Activated naive CD4-positive, alpha-beta T cell treated with anti-CD3 and anti-CD28 coated beads for 36 hours (primary cell): ENCODE measurements at regions of chr19 and their contacts with region 1.

Region 1: GRCh38 chr19:45584332-45585157 is at the start of gene OPA3:
- DNase-seq: peak; percentile 100
- H3K4me3 Mint-ChIP-seq: peak within 1 kb of the TSS; percentile 89
- H3K27ac Mint-ChIP-seq: peak within 1 kb of the TSS; percentile 98
- H3K4me1 Mint-ChIP-seq: peaks cover 14% of the 10 kb centered on the region
- H3K27me3 Mint-ChIP-seq: peaks cover 3% of the 10 kb centered on the region
- total RNA-seq, gene OPA3: 12.4 to 12.7 TPM

Region 2: GRCh38 chr19:45370410-45371204 is 213.9 kb before region 1 on chr19 and contains the start of gene ERCC2:
- CTCF ChIA-PET with region 1: no interaction called
- intact Hi-C with region 1: loop called (anchors 1 kb)
- DNase-seq: peak; percentile 100
- H3K4me3 Mint-ChIP-seq: peak within 1 kb of the TSS; percentile 93
- H3K27ac Mint-ChIP-seq: peak within 1 kb of the TSS; percentile 91
- H3K4me1 Mint-ChIP-seq: peaks cover 5% of the 10 kb centered on the region
- H3K27me3 Mint-ChIP-seq: no peaks in the 10 kb centered on the region
- total RNA-seq, gene ERCC2: 20.6 to 22.9 TPM

Region 3: DNA sequence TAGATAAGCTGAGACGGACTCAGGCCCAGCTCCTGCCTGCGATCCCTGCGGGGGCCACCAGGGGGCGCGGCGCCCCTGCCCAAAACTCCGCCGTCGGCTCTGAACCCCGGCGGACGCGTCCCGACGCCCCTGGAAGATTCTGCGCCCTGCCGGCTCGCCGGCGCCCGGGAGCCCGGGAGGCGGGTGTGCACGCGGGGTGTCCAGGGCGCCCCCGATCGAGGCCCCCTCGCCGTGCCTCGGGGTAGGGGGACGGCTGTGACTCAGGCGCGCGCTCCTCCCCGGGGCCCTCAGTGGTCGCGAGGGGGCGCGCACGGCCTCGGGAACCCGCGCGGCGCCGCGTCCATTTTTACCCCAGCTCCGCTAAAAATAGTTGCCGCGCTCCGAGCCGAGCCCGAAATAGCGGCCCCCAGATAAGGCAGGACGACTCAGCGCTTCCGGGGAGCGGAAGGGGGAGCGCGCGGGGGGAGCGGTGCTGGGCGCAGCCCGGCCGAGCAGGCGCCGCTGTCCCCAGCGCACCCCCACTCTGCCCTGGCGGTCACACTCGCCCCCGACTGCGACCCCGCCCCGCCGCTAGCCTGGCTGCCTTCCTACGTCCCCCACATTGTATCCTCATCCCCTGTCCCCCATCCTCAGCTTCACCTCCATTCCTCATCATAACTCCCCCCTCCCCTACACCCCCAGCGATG is 144.8 kb before region 1 on chr19:
- CTCF ChIA-PET with region 1: interaction called, 3 read pairs
- intact Hi-C with region 1: loop called (anchors 5 kb)
- DNase-seq: peak; percentile 81
- H3K4me3 Mint-ChIP-seq: peak overlapping the region; percentile 58
- H3K27ac Mint-ChIP-seq: no peak overlapping the region
- H3K4me1 Mint-ChIP-seq: peaks cover 27% of the 10 kb centered on the region
- H3K27me3 Mint-ChIP-seq: no peaks in the 10 kb centered on the region

Region 4: GRCh38 chr19:45558399-45558878 is 26.1 kb before region 1 on chr19:
- CTCF ChIA-PET with region 1: interaction called, 8 read pairs
- intact Hi-C with region 1: loop called (anchors 1 kb)
- DNase-seq: peak; percentile 88
- H3K4me3 Mint-ChIP-seq: no peak overlapping the region
- H3K27ac Mint-ChIP-seq: no peak overlapping the region
- H3K4me1 Mint-ChIP-seq: peaks cover 30% of the 10 kb centered on the region
- H3K27me3 Mint-ChIP-seq: no peaks in the 10 kb centered on the region

Region 5: DNA sequence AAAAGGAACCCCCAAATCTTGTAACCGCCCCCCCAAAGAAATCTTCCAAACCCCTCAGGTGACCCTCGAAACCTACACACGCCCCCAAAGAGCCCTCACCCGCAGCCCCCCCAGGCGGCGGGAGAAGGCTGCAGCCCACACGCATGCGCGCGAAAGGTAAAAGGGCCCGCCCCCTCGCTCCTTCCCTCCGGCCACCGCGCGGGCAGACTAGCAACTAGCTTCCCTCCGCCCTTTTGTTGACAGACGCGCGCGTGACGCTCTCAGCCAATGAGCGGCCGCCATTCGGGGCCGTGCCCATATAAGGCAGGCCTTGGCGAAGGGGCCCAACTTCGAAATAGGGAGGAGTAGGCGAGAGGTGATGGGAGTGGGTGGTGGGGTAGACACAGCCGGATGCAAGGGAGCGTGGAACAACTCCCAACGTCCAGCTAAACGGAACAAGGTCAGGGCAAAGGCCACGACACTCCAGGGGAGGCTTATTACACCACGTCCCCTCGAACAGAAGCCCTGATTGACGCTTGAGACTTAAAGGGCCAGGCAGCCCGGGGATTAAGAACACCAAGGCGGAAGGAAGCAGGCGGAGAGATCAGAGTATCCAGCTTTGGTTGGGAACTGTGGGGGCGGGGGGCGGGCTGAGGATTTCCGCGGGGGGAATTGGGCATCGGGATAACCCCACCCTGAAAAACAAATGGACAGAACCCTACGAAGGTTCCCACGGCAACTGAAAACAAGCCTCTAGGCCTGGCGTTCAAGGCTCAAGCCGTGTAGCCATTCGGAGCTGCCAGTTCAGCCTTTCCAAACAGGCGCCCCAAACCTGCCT is 132.8 kb after region 1 on chr19:
- CTCF ChIA-PET with region 1: no interaction called
- intact Hi-C with region 1: loop called (anchors 1 kb)
- DNase-seq: peak; percentile 99
- H3K4me3 Mint-ChIP-seq: peak overlapping the region; percentile 96
- H3K27ac Mint-ChIP-seq: peak overlapping the region; percentile 97
- H3K4me1 Mint-ChIP-seq: peaks cover 41% of the 10 kb centered on the region
- H3K27me3 Mint-ChIP-seq: no peaks in the 10 kb centered on the region

Region 6: GRCh38 chr19:45792470-45793177 is 208.1 kb after region 1 on chr19 and contains the start of gene DMWD:
- CTCF ChIA-PET with region 1: no interaction called
- intact Hi-C with region 1: loop called (anchors 10 kb)
- DNase-seq: peak; percentile 100
- H3K4me3 Mint-ChIP-seq: peak within 1 kb of the TSS; percentile 93
- H3K27ac Mint-ChIP-seq: peak within 1 kb of the TSS; percentile 71
- H3K4me1 Mint-ChIP-seq: peaks cover 24% of the 10 kb centered on the region
- H3K27me3 Mint-ChIP-seq: peaks cover 13% of the 10 kb centered on the region
- total RNA-seq, gene DMWD: 28.6 to 29.1 TPM